MCF 10A (cell line): ENCODE measurements at regions of chr22 and their contacts with region 1.

Region 1: DNA sequence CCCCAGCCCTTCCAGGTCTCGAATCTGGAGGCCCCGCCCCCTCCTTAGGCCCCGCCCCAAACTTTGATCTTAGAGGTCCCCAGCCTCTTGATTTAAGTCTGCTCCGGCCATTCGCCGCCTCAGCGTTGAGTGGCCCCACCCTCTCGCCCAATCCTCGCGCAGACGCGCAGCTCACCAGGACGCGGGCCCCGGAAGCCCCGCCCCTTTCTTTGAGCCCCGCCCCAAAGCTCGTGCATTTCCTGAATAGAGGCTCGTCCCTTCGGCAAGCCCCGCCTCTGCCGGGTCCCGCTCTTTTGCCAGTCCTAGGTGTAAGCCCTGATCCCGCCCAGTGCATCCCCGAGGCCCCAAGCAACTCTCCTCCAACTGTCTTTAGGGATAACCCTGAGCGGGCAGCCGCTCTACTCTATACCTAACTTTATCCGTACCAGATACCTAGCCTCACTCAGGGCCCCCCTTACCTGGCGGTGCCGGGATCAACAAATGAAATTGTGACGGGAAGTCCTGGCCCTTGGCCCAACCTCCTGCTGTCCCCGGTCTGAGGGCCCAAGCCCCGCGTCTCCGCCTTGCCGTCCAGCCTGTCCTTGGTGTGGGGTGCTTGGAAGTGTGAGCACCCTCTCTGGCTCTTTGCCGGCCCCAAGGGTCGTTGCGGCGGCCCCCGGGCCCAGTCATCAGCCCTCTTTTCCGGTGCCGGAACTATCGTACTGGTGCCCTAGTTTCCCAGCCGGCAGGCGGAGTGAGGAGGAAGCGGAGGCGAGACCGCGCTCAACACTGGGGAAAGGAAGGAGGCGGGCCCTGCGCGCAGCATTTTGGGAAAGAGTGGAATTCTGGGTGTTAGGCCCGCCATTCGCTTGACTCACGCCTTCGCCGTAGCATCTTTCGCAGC is at the start of gene SNRPD3:
- DNase-seq: peak; percentile 98
- H3K4me3 Mint-ChIP-seq: peak within 1 kb of the TSS; percentile 96
- H3K27ac Mint-ChIP-seq: peak within 1 kb of the TSS; percentile 97
- H3K4me1 Mint-ChIP-seq: peaks cover 42% of the 10 kb centered on the region
- H3K27me3 Mint-ChIP-seq: no peaks in the 10 kb centered on the region
- CTCF ChIP-seq: no peak
- total RNA-seq, gene SNRPD3: 90.9 and 94.6 TPM in 2 replicates

Region 2: GRCh38 chr22:24492391-24492790 is 63.0 kb before region 1 on chr22:
- CTCF ChIA-PET with region 1: no interaction called
- POLR2A ChIA-PET with region 1: no interaction called
- intact Hi-C with region 1: no loop called
- DNase-seq: no peak
- H3K4me3 Mint-ChIP-seq: no peak overlapping the region
- H3K27ac Mint-ChIP-seq: no peak overlapping the region
- H3K4me1 Mint-ChIP-seq: no peaks in the 10 kb centered on the region
- H3K27me3 Mint-ChIP-seq: no peaks in the 10 kb centered on the region
- CTCF ChIP-seq: no peak

Region 3: DNA sequence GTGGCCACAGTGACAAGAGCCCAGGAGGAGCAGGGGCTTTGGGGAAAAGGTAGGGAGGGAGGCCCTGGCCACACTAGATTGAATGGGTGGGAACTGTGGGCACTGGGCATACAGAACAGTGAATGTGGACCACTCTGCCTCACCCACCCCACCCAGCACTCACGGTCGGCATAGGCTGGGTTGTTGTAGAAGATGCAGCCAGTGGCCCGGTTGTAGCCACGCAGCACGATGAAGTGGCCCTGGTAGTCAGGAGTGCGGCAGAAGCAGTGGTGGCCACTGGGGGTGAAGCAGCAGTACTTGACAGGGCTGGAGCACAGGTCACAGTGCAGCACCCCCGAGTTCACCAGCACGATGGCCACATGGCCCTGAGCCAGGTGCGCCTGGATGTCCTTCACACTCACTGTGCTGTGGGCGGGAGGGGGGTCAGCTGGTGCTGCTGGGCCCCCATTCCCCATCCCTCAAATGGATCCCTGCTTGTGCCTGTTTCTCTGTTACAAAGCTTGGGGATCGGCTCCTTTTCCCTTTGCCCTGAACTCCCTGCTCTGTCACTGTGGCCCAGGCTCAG is 11.6 kb before region 1 on chr22:
- CTCF ChIA-PET with region 1: interaction called, 4 read pairs
- POLR2A ChIA-PET with region 1: interaction called, 17 read pairs
- intact Hi-C with region 1: no loop called
- DNase-seq: no peak
- H3K4me3 Mint-ChIP-seq: no peak overlapping the region
- H3K27ac Mint-ChIP-seq: no peak overlapping the region
- H3K4me1 Mint-ChIP-seq: no peaks in the 10 kb centered on the region
- H3K27me3 Mint-ChIP-seq: no peaks in the 10 kb centered on the region
- CTCF ChIP-seq: no peak

Region 4: DNA sequence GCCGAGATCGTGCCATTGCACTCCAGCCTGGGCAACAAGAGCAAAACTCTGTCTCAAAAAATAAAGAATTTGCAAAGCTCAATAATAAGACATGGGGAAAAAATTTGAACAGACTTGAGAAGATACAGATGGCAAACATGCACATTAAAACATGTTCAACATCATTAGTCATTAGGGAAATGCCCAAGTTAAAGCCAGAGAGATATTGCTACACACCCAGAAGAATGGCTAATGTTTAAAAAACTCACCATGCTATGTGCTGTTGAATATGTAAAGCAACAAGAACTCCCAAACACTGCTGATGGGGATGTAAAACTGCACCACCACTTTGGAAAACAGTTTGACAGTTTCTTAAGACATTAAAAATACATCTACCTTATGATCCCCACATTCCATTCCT is 24.9 kb after region 1 on chr22:
- CTCF ChIA-PET with region 1: no interaction called
- POLR2A ChIA-PET with region 1: interaction called, 31 read pairs
- intact Hi-C with region 1: no loop called
- DNase-seq: peak; percentile 43
- H3K4me3 Mint-ChIP-seq: no peak overlapping the region
- H3K27ac Mint-ChIP-seq: no peak overlapping the region
- H3K4me1 Mint-ChIP-seq: peaks cover 17% of the 10 kb centered on the region
- H3K27me3 Mint-ChIP-seq: no peaks in the 10 kb centered on the region
- CTCF ChIP-seq: no peak